A673 (cell line): ENCODE measurements at regions of chr3 and their contacts with region 1.

Region 1: DNA sequence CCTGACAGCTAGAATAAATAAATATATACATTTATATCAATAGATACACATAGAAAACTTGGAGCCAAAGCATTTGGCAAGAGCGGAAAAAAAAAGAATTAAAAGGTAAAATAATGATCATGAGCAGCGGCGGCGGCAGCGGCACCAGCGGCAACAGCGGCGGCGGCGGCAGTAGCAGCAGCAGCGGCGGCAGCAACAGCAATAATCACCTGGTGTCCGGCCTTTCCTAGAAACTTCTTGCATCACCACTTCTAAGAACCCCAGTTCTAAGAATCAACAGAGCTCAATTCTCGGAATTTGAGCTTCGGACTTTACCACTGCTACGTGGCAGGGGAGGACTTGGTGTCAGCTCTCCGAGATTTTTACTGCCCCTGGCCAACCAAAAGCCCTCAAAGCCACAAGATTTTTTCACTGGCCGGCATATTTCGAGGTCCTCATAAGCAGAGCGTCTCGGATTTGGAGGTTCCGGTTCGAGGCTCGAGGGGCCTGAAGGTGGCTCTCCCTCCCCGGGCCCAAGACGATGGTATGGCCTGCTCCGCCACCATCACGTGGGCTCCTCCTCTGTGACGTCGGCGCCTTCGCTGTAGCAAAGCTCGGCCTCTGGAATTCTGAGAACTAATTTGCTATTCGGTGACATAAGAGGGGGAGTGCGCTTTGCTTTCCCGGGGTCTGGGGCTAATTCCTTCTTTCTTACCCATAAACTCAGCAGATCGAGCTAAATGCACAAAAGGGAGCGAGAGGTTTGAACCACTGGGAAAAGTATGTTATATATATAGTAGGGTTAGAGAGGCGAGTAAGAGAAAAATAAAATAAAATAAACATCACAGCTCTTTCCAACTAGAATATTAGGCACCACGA is at the start of gene BCL6:
- DNase-seq: peak; percentile 97
- H3K4me3 ChIP-seq: peak within 1 kb of the TSS; percentile 70
- H3K27ac ChIP-seq: peak within 1 kb of the TSS; percentile 100
- H3K4me1 ChIP-seq: peaks cover 34% of the 10 kb centered on the region
- H3K27me3 ChIP-seq: no peaks in the 10 kb centered on the region
- CTCF ChIP-seq: no peak; the same call in 1 of the 2 replicates
- total RNA-seq, gene BCL6: 30.3 and 31.7 TPM in 2 replicates

Region 2: GRCh38 chr3:188220988-188221818 is 475.8 kb after region 1 on chr3:
- CTCF ChIA-PET with region 1: no interaction called
- POLR2A ChIA-PET with region 1: no interaction called
- intact Hi-C with region 1: loop called (anchors 10 kb)
- DNase-seq: no peak
- H3K4me3 ChIP-seq: no peak overlapping the region
- H3K27ac ChIP-seq: no peak overlapping the region
- H3K4me1 ChIP-seq: peaks cover 14% of the 10 kb centered on the region
- H3K27me3 ChIP-seq: no peaks in the 10 kb centered on the region
- CTCF ChIP-seq: no peak

Region 3: GRCh38 chr3:188510366-188510765 is 764.9 kb after region 1 on chr3:
- CTCF ChIA-PET with region 1: no interaction called
- POLR2A ChIA-PET with region 1: no interaction called
- intact Hi-C with region 1: loop called (anchors 2 kb)
- DNase-seq: peak; percentile 52
- H3K4me3 ChIP-seq: no peak overlapping the region
- H3K27ac ChIP-seq: peak overlapping the region; percentile 85
- H3K4me1 ChIP-seq: peaks cover 54% of the 10 kb centered on the region
- H3K27me3 ChIP-seq: no peaks in the 10 kb centered on the region
- CTCF ChIP-seq: no peak

Region 4: GRCh38 chr3:188683032-188683521 is 937.6 kb after region 1 on chr3:
- CTCF ChIA-PET with region 1: no interaction called
- POLR2A ChIA-PET with region 1: no interaction called
- intact Hi-C with region 1: loop called (anchors 10 kb)
- DNase-seq: no peak
- H3K4me3 ChIP-seq: no peak overlapping the region
- H3K27ac ChIP-seq: no peak overlapping the region
- H3K4me1 ChIP-seq: peaks cover 6% of the 10 kb centered on the region
- H3K27me3 ChIP-seq: no peaks in the 10 kb centered on the region
- CTCF ChIP-seq: no peak

Region 5: DNA sequence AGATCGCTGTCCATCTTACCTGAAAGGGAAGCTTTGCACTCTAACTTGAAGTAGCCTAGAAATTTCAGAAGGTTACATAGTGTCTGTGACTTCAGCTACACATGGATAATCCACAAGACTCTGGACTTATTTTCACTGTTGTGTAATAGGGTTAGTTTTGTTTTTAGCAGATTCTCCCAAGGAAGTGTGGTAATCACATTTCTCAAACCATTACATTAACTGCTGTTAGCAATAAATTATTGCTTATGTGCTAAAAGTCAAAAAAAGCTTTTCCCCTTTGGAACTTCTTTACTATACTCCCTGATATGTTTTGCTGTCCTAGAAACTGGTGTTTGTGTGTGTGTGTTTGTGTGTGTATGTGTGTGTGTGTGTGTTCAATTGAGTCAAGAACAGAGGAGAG is 1074.5 kb after region 1 on chr3:
- CTCF ChIA-PET with region 1: no interaction called
- POLR2A ChIA-PET with region 1: no interaction called
- intact Hi-C with region 1: loop called (anchors 10 kb)
- DNase-seq: peak; percentile 42
- H3K4me3 ChIP-seq: no peak overlapping the region
- H3K27ac ChIP-seq: no peak overlapping the region
- H3K4me1 ChIP-seq: peaks cover 46% of the 10 kb centered on the region
- H3K27me3 ChIP-seq: no peaks in the 10 kb centered on the region
- CTCF ChIP-seq: no peak